ENCODE measurements at regions of chr9 and their contacts with region 1.

Region 1: DNA sequence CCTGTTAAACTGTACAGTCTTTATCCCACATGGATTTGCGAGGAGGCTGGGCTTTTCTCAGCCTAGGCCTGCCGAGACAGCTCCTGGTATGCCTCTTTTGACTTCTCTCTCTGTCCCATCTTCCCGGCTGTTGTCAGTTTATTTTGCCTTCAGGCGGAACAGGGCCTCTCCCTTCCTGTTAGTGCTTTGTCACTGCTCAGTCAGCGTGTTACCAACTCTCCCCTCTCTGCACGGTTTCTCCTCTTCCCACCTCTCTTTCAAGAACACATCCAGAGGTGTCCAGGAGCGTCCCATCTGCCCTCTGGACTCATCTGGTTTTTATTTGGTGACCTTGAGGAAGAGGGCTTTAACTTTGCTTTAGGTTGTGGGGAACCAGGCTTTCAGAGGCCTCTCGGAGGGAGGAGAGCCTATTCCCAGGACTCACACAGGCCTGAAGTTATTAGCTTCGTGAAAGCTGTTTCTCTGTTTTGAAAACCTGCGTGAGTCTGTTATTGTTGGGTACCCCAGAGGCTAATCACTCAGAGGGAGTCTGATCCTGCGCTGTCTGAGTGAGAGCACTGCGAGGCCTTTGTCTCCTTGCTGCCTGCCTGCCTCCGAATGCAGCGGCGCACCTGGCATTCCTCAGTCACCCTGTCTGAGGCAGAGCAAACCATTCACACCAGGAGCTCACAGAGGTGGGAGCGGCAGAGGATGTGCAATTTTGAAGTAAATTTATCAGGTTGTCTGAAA is 234.4 kb upstream of the MPDZ start:
- DNase-seq: no peak
- ATAC-seq: no peak
- H3K4me3 ChIP-seq: no peak overlapping the region
- H3K27ac ChIP-seq: no peak overlapping the region
- H3K4me1 ChIP-seq: no peaks in the 10 kb centered on the region
- H3K27me3 ChIP-seq: no peaks in the 10 kb centered on the region
- CTCF ChIP-seq: no peak
- POLR2A ChIP-seq: no peak

Region 2: DNA sequence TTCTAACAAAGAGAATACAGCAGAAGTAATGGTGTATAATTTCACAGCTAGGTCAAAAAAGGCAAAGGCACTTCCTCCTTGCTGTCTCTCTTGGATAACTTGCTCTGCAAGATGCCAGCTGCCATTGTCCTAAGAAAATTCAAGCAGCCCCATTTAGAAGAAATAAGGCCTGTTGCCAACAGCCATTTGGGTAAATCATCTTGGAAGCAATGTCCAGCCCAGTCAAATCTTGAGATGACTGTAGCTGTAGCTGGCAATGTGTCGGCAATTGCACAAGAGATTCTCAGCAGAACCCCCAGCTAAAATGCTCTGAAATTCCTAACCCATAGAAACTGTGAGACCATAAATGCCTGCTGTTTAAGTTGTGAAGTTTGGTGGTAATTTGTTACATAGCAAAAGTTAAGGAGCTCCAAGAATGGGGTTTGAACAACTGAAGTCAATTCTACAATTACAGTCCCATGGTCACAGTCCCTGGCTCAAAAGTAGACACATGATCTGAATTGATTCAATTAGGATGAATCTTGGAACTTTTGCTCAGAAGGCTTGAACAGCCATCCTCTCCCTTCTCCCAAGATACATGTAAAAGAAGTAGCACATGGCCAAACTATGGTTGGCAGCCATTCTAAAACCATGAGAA is 385.5 kb before region 1 on chr9:
- intact Hi-C with region 1: no loop called
- DNase-seq: no peak
- ATAC-seq: no peak
- H3K4me3 ChIP-seq: no peak overlapping the region
- H3K27ac ChIP-seq: no peak overlapping the region
- H3K4me1 ChIP-seq: no peaks in the 10 kb centered on the region
- H3K27me3 ChIP-seq: no peaks in the 10 kb centered on the region
- CTCF ChIP-seq: no peak
- POLR2A ChIP-seq: no peak

Region 3: GRCh38 chr9:13570068-13570974 is 56.4 kb after region 1 on chr9:
- intact Hi-C with region 1: loop called (anchors 10 kb)
- DNase-seq: no peak
- ATAC-seq: peak; percentile 27
- H3K4me3 ChIP-seq: no peak overlapping the region
- H3K27ac ChIP-seq: peak overlapping the region in 1 of 4 donors; percentile 10
- H3K4me1 ChIP-seq: no peaks in the 10 kb centered on the region
- H3K27me3 ChIP-seq: no peaks in the 10 kb centered on the region
- CTCF ChIP-seq: no peak
- POLR2A ChIP-seq: no peak